ENCODE measurements at regions of chr4 and their contacts with region 1.

Region 1: DNA sequence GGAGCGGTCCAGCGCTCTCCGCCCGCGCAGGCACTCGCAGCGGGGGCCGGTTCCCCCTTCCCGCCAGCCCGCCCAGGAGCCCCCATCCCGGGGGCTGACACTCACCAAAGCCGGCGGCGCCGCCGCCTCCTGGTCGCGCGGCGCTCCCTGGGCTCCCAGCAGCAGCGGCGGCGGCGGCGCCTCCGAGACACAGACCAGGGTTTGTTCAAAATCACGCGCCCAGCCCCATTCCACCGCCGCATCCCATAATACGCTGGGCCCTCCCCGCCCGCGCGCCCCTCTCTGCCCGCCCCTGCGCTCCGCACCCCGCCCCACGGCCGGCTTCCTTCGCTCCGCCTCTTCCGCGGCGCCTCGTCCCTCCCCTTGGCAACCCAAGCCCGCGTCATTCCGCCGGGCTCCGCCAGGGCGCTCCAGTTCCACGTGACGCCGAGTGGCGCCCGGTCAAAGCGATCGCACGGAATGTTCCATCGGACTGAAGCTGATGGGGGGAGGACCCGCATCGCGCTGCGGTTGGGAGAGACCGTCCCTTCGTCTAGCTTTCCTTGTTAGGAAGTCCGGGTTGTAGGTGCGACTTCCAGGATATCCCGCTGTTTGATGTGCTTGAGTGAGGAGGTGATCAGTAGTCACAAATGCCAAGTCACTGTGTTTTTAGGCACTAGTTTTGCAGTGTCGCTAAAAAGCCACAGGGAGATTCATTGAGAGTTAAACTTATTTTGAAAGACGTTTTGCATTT is 2.2 kb upstream of the LIN54 start:
- DNase-seq: peak; percentile 99
- H3K4me3 ChIP-seq: peak overlapping the region; percentile 80 to 97 (median 83)
- H3K27ac ChIP-seq: peak overlapping the region; percentile 71
- H3K4me1 ChIP-seq: peaks cover 19% of the 10 kb centered on the region
- H3K27me3 ChIP-seq: no peaks in the 10 kb centered on the region
- CTCF ChIP-seq: peak; percentile 39 to 70
- POLR2A ChIP-seq: peak; percentile 37

Region 2: GRCh38 chr4:82373816-82374625 is 638.8 kb before region 1 on chr4 and contains the start of gene HNRNPD:
- CTCF ChIA-PET with region 1: no interaction called
- POLR2A ChIA-PET with region 1: no interaction called
- dilution Hi-C with region 1: no loop called
- intact Hi-C with region 1: loop called (anchors 2 kb)
- DNase-seq: peak; percentile 99
- H3K4me3 ChIP-seq: peak within 1 kb of the TSS; percentile 63 to 100 (median 100)
- H3K27ac ChIP-seq: peak within 1 kb of the TSS; percentile 91
- H3K4me1 ChIP-seq: peaks cover 31% of the 10 kb centered on the region
- H3K27me3 ChIP-seq: no peaks in the 10 kb centered on the region
- CTCF ChIP-seq: no peak
- POLR2A ChIP-seq: peak; percentile 88
- total RNA-seq, gene HNRNPD: 361 and 363 TPM in 2 replicates

Region 3: GRCh38 chr4:82785611-82786400 is 227.0 kb before region 1 on chr4:
- CTCF ChIA-PET with region 1: no interaction called
- POLR2A ChIA-PET with region 1: no interaction called
- dilution Hi-C with region 1: no loop called
- intact Hi-C with region 1: loop called (anchors 1 kb)
- DNase-seq: peak; percentile 98
- H3K4me3 ChIP-seq: peak overlapping the region; percentile 12 to 69 (median 21)
- H3K27ac ChIP-seq: peak overlapping the region; percentile 98
- H3K4me1 ChIP-seq: peaks cover 44% of the 10 kb centered on the region
- H3K27me3 ChIP-seq: no peaks in the 10 kb centered on the region
- CTCF ChIP-seq: no peak
- POLR2A ChIP-seq: no peak

Region 4: DNA sequence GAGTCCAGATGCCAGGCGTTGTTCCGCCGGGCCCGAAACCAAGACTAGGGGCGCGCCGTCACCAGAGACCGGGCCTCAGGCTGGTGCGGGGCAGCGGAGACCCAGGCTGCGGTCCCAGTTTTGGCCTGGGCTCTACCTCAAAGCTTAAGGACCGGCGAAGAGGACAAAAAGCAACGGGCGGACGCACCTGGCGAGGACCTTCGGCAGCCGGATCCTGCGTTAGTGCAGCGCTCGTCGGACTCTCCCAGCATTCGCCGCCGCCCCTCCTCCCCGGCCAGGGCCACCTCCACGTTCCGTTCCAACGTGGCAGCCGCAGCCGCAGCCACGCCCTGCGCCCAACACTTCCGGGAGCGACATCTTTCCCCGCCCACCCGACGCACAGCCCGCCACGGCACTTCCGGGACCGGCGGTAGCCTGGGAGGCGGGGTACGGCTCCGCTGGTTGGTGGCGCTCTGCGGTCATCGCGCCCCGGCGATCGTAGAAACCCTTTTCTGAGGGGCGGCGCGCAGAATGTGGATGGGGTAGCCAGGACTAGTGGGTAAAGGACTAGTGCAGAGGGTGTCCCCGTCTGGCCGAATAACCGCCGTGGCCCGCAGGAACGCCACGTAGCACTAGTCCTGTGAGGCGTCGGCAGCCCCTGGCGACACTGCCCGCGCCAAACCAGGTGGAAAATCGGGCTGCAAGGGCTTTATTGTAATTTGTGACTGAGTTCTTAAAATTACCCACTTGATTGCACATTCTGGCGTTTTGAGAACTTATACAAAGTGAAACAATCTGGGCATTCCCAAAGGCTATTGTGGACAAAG is 121.7 kb before region 1 on chr4 and contains the start of gene SEC31A:
- CTCF ChIA-PET with region 1: interaction called, 3 read pairs
- POLR2A ChIA-PET with region 1: no interaction called
- dilution Hi-C with region 1: no loop called
- intact Hi-C with region 1: loop called (anchors 1 kb)
- DNase-seq: peak; percentile 98
- H3K4me3 ChIP-seq: peak within 1 kb of the TSS; percentile 68 to 99 (median 68)
- H3K27ac ChIP-seq: peak within 1 kb of the TSS; percentile 89
- H3K4me1 ChIP-seq: peaks cover 23% of the 10 kb centered on the region
- H3K27me3 ChIP-seq: no peaks in the 10 kb centered on the region
- CTCF ChIP-seq: no peak
- POLR2A ChIP-seq: peak; percentile 94
- total RNA-seq, gene SEC31A: 290 and 301 TPM in 2 replicates

Region 5: DNA sequence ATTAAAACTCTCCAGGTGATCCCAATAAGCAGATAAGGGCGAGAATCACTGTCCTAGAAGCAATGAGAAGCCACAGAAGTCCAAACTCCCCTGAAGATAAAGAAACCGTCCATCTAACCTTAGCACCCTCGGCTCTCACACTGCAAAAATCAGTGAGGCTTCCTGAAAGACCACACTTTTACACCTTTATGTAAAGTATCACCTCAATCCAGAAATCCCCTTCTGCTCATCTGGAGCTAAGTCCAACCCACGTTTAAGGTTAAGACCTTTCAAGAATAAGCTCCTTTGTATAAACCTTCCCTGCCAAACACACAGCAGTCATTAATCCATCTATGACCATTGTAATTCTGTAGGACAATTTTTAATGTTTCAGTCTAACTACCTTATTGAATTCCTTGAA is 43.9 kb before region 1 on chr4:
- CTCF ChIA-PET with region 1: no interaction called
- POLR2A ChIA-PET with region 1: no interaction called
- dilution Hi-C with region 1: no loop called
- intact Hi-C with region 1: no loop called
- DNase-seq: no peak
- H3K4me3 ChIP-seq: no peak overlapping the region
- H3K27ac ChIP-seq: no peak overlapping the region
- H3K4me1 ChIP-seq: no peaks in the 10 kb centered on the region
- H3K27me3 ChIP-seq: no peaks in the 10 kb centered on the region
- CTCF ChIP-seq: no peak
- POLR2A ChIP-seq: no peak

Region 6: DNA sequence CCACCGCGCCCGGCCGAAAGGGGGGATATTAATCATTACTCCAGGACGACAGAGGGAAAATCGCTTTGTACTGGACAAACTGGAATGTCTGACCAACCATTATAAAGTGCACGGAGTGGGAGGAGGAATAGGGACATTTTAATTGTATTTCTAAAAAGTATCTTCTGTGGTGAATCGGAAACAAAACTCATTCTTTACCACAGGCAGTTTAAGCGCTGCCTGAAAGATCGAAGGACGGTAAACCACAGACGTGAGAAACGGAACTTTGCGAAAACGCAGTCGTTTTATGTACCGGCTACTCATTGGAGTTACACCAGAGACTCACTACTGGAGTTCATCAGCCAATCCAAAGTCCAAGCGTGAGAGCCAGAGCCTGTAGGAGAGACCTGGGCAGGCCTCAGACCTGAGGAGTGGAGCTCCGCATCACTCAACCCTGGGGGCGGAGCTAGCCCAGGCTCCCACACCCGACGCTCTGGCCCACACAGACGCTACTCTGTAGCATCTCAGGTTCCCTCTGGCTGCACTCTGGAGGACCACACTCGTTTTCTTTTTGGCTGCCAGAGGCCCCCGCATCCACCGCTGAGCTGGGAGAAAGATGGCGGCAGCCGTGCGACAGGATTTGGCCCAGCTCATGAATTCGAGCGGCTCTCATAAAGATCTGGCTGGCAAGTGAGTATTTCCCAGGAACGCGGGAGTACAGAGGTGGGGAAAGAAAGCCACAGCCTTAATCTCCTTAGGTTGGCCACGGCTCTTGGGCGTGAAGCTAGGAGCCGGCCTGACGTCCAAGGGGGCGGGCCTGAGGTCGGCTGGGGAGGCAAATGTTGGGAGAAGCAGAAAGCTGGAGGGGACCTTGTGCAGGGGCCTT is 22.0 kb after region 1 on chr4 and contains the start of gene COPS4:
- CTCF ChIA-PET with region 1: interaction called, 32 read pairs
- POLR2A ChIA-PET with region 1: interaction called, 13 read pairs
- dilution Hi-C with region 1: no loop called
- intact Hi-C with region 1: loop called (anchors 1 kb)
- DNase-seq: peak; percentile 100
- H3K4me3 ChIP-seq: peak within 1 kb of the TSS; percentile 78 to 94 (median 91)
- H3K27ac ChIP-seq: peak within 1 kb of the TSS; percentile 88
- H3K4me1 ChIP-seq: peaks cover 28% of the 10 kb centered on the region
- H3K27me3 ChIP-seq: peaks cover 0 to 3% of the 10 kb centered on the region in 2 experiments
- CTCF ChIP-seq: peak in 1 of 2 donors; percentile 40
- POLR2A ChIP-seq: peak; percentile 88
- total RNA-seq, gene COPS4: 47.3 and 53.0 TPM in 2 replicates

Region 7: GRCh38 chr4:83150653-83151330 is 137.9 kb after region 1 on chr4:
- CTCF ChIA-PET with region 1: no interaction called
- POLR2A ChIA-PET with region 1: no interaction called
- dilution Hi-C with region 1: no loop called
- intact Hi-C with region 1: loop called (anchors 2 kb)
- DNase-seq: peak; percentile 87
- H3K4me3 ChIP-seq: peak overlapping the region in 1 of 3 experiments; percentile 7
- H3K27ac ChIP-seq: peak overlapping the region; percentile 78
- H3K4me1 ChIP-seq: peaks cover 38% of the 10 kb centered on the region
- H3K27me3 ChIP-seq: no peaks in the 10 kb centered on the region
- CTCF ChIP-seq: no peak
- POLR2A ChIP-seq: peak; percentile 16

Region 8: DNA sequence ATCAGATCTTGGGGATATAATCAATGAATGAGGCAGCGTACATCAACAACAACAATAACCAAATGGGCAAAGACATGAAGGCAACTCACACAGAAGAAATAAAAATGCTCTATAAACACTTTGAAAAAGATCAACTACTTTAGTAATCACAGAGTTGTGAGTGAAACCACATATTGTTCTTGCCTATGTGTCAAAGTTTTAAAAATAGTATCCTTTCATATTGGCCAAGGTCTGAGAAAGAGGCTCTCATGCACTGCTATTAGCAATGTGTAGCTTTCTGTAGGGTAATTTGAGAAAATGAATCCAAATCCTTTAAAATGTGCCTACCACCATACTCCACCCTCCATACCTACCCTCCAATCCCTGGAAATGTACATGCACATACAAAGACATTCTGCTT is 246.7 kb after region 1 on chr4:
- CTCF ChIA-PET with region 1: interaction called, 12 read pairs
- POLR2A ChIA-PET with region 1: no interaction called
- dilution Hi-C with region 1: no loop called
- intact Hi-C with region 1: loop called (anchors 1 kb)
- DNase-seq: no peak
- H3K4me3 ChIP-seq: no peak overlapping the region
- H3K27ac ChIP-seq: no peak overlapping the region
- H3K4me1 ChIP-seq: peaks cover 39% of the 10 kb centered on the region
- H3K27me3 ChIP-seq: no peaks in the 10 kb centered on the region
- CTCF ChIP-seq: no peak
- POLR2A ChIP-seq: no peak

Measured in endothelial cell of umbilical vein (primary cell).